T-cell (primary cell): ENCODE measurements at regions of chr3 and their contacts with region 1.

Region 1: DNA sequence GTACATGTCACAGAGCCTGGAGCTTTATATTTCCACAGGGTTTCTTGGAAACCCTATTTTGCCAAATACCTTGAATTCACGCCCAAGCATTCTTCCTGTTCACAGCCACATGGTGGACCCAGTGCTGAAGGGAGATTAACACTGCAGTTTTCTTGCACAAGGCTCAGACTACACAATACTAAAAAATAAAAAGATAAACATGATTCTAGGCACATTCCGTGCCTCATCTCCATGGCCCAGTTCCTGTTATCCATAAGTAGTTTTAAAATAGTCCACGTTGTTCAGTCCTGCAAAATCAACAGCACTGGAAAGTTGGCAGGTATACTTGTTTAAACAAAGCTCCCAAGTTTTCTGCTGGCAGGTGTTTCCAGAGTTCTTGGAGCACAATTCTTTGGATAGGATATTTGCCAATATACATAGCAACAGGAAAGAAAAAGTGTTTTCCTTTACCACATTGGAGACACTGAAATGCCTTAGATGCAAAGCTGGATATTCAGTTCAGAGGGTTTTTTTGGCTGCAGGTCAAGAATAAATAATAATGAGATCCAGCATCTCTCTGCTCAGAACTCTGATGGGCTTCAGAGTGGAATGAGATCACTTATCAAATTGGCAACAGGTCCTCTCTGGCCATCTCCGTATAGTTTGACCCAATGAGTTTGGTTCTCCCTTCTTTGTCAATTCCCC is 88.1 kb upstream of the TGFBR2 start:
- DNase-seq: no peak
- ATAC-seq: no peak
- H3K4me3 ChIP-seq: no peak overlapping the region
- H3K4me3 Mint-ChIP-seq: no peak overlapping the region
- H3K27ac ChIP-seq: no peak overlapping the region
- H3K27ac Mint-ChIP-seq: no peak overlapping the region
- H3K4me1 ChIP-seq: no peaks in the 10 kb centered on the region
- H3K4me1 Mint-ChIP-seq: peaks cover 10 to 12% (median 12%) of the 10 kb centered on the region in 3 donors
- H3K27me3 ChIP-seq: no peaks in the 10 kb centered on the region
- H3K27me3 Mint-ChIP-seq: no peaks in the 10 kb centered on the region

Region 2: GRCh38 chr3:30567139-30567753 is 48.9 kb after region 1 on chr3:
- CTCF ChIA-PET with region 1: no interaction called
- POLR2A ChIA-PET with region 1: interaction called in 1 of 2 experiments, 15 read pairs
- DNase-seq: no peak
- ATAC-seq: no peak
- H3K4me3 ChIP-seq: no peak overlapping the region
- H3K4me3 Mint-ChIP-seq: no peak overlapping the region
- H3K27ac ChIP-seq: no peak overlapping the region
- H3K27ac Mint-ChIP-seq: no peak overlapping the region
- H3K4me1 ChIP-seq: no peaks in the 10 kb centered on the region
- H3K4me1 Mint-ChIP-seq: no peaks in the 10 kb centered on the region
- H3K27me3 ChIP-seq: no peaks in the 10 kb centered on the region
- H3K27me3 Mint-ChIP-seq: no peaks in the 10 kb centered on the region

Region 3: DNA sequence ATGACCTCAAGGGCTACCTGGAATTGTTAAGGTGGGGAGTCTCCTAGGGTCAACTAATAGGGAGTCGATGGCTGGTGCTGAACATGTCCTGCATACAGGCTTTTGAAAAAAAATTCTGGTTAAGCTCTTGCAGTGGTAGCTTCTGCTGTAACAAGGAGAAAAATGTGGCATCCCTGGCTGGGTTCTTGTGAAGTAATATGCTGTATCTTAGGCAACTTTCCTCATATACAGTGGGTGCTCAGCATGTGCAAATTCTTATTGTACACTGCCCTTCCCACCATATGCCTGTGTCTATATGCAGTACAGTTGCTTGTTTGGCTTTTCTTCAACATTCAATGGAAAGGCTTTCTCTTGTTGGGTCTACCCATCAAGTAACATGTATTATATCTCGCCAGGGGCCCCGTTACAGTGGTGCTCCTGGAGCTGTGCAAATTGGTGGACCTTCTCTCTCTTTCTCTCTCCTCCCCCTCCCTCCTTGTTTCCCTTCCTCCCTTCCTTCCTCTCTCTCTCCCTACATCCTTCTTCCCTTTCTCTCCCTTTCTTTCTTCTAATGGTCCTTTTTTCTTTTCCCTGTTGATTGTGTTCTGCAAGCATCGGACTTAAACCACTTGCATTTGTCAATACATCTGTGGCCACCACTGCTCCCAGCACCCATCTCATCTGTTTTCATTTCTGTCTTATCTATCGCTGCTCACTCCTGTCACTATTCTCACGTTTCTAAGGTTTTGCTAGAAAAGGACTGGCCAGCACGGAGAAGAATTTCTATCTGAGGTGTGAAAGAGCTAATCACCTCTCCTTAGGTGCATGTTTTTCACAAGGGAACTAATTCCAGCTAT is 123.3 kb after region 1 on chr3:
- CTCF ChIA-PET with region 1: no interaction called
- POLR2A ChIA-PET with region 1: interaction called in 1 of 2 experiments, 14 read pairs
- DNase-seq: no peak
- ATAC-seq: no peak
- H3K4me3 ChIP-seq: peak overlapping the region in 1 of 2 donors; percentile 18
- H3K4me3 Mint-ChIP-seq: peak overlapping the region; percentile 29 to 56 (median 37)
- H3K27ac ChIP-seq: peak overlapping the region; percentile 90
- H3K27ac Mint-ChIP-seq: peak overlapping the region; percentile 93 to 98
- H3K4me1 ChIP-seq: peaks cover 76 to 87% of the 10 kb centered on the region in 2 experiments
- H3K4me1 Mint-ChIP-seq: peaks cover 98 to 100% (median 98%) of the 10 kb centered on the region in 3 donors
- H3K27me3 ChIP-seq: no peaks in the 10 kb centered on the region
- H3K27me3 Mint-ChIP-seq: no peaks in the 10 kb centered on the region